ENCODE measurements at regions of chr11 and their contacts with region 1.

Region 1: DNA sequence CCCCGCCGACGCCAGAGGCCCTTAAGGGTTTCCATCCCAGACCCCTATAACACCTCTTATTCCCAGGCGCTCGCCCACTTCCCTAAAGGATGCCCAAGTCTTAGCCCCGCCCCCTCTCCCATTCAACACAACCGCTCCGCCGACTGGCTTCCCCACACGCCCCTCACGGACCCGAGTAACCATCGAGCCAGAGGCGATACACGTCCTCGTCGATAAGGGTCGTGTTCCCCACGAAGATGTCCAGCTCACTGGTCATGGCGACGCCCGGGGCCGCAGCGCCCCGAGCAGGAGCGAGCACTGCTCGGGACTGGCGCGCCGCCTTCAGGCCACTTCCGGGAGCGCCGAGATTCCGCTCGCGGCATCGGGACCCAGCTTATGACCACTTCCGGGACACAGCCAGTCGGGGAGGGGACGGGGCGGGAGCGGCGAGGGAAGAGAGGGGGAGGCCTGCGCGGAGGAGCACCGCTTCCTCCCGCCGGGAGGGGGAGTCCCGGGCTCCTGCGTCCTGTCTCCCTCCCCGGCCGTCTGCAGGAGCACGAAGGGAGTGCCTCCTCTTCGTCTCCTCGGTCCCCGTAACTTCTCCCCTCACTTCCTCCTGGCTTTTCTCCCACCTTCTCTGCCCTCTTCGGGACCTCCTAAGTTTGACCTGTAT is at the start of gene FIBP:
- DNase-seq: peak; percentile 85 to 98 (median 91)
- ATAC-seq: peak; percentile 50 to 57
- H3K4me3 Mint-ChIP-seq: peak within 1 kb of the TSS; percentile 87 to 96 (median 90)
- H3K27ac Mint-ChIP-seq: peak within 1 kb of the TSS; percentile 94 to 100 (median 99)
- H3K4me1 Mint-ChIP-seq: peaks cover 38 to 79% (median 72%) of the 10 kb centered on the region in 4 donors
- H3K27me3 Mint-ChIP-seq: no peaks in the 10 kb centered on the region
- polyA plus RNA-seq, gene FIBP: 74.9 to 97.6 (median 86.0) TPM

Region 2: DNA sequence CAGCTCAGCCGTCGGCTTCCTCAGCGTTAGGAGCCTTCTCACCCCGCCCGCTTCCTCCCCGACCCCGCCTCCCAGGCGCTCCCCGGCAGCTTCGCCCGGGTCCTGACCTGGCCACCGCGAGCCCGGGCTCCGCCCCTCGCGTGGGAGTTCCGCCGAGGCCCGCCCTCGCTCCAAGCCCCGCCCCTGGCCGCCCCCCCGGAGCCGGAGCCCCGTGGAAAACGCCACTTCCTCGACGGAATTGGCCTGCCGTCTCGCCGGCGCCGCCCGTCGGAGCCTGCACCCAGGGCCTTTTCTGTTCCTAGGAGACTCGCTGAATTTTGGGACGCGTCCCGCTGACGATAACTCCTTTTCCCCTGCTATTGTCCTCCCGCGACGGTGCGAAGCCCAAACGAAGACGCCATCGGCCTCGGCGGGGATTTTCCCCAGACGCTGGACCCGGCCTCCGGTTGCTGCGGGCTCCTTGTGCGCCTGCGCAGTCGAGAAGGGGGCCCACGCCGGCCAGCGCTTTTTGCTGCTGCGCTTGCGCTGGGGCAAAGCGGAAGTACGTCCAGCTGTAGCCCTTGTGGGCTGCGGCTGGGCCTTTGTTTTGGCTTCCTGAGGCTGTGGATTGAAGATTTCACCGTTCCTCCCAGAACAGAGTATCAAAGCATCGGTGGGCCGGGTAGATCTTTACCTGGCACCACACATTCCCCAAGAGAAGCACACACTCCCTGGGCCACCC is 235.6 kb before region 1 on chr11:
- POLR2A ChIA-PET with region 1: interaction called, 10 read pairs
- DNase-seq: peak; percentile 92 to 99 (median 96)
- ATAC-seq: peak; percentile 77 to 81
- H3K4me3 Mint-ChIP-seq: peak overlapping the region; percentile 73 to 95 (median 91)
- H3K27ac Mint-ChIP-seq: peak overlapping the region; percentile 96 to 99 (median 98)
- H3K4me1 Mint-ChIP-seq: peaks cover 38 to 66% (median 52%) of the 10 kb centered on the region in 4 donors
- H3K27me3 Mint-ChIP-seq: peaks cover 0 to 2% (median 0%) of the 10 kb centered on the region in 5 donors

Region 3: DNA sequence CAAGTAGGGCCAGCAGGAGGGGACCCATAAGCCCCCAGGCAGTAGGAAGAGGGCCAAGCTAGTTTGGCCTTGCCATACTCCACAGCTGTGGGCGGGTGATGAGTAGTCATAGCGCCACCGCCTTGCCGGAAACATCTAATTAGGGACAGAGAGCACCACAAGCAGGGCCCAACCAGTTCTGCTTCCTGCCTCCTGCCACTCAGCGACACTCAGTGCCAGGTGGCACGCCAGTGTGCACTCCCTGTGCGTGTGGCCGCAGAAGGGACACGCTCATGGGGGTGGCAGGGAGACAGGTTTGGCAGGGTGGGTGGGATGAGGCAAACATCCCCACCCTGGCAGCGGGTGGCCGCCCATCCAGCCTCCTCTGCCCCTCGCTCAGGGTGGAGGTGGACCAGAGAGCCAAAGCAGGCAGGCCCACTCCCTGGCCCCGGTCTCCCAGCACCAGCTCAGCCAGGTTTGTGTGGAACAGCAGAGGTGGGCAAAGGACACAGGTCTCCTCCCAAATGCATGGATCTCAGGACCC is 96.5 kb before region 1 on chr11:
- POLR2A ChIA-PET with region 1: no interaction called
- DNase-seq: peak in 2 of 10 donors; percentile 25 to 30
- ATAC-seq: peak in 1 of 2 donors; percentile 81
- H3K4me3 Mint-ChIP-seq: no peak overlapping the region
- H3K27ac Mint-ChIP-seq: no peak overlapping the region
- H3K4me1 Mint-ChIP-seq: peaks cover 3 to 19% (median 12%) of the 10 kb centered on the region in 4 donors
- H3K27me3 Mint-ChIP-seq: peaks cover 9 to 44% (median 25%) of the 10 kb centered on the region in 5 donors

Region 4: GRCh38 chr11:65873318-65874156 is 14.8 kb before region 1 on chr11:
- POLR2A ChIA-PET with region 1: interaction called, 209 read pairs
- DNase-seq: peak; percentile 90 to 100 (median 97)
- ATAC-seq: peak; percentile 83 to 92
- H3K4me3 Mint-ChIP-seq: peak overlapping the region; percentile 82 to 94 (median 90)
- H3K27ac Mint-ChIP-seq: peak overlapping the region; percentile 83 to 97 (median 94)
- H3K4me1 Mint-ChIP-seq: peaks cover 21 to 59% (median 45%) of the 10 kb centered on the region in 4 donors
- H3K27me3 Mint-ChIP-seq: no peaks in the 10 kb centered on the region

Region 5: GRCh38 chr11:65919146-65920033 is 31.1 kb after region 1 on chr11 and contains the start of gene DRAP1:
- POLR2A ChIA-PET with region 1: interaction called, 183 read pairs
- DNase-seq: peak; percentile 95 to 100 (median 98)
- ATAC-seq: peak; percentile 86 to 92
- H3K4me3 Mint-ChIP-seq: peak within 1 kb of the TSS; percentile 88 to 97 (median 92)
- H3K27ac Mint-ChIP-seq: peak within 1 kb of the TSS; percentile 77 to 96 (median 92)
- H3K4me1 Mint-ChIP-seq: peaks cover 19 to 65% (median 48%) of the 10 kb centered on the region in 4 donors
- H3K27me3 Mint-ChIP-seq: no peaks in the 10 kb centered on the region
- polyA plus RNA-seq, gene DRAP1: 103 to 112 (median 110) TPM

Region 6: DNA sequence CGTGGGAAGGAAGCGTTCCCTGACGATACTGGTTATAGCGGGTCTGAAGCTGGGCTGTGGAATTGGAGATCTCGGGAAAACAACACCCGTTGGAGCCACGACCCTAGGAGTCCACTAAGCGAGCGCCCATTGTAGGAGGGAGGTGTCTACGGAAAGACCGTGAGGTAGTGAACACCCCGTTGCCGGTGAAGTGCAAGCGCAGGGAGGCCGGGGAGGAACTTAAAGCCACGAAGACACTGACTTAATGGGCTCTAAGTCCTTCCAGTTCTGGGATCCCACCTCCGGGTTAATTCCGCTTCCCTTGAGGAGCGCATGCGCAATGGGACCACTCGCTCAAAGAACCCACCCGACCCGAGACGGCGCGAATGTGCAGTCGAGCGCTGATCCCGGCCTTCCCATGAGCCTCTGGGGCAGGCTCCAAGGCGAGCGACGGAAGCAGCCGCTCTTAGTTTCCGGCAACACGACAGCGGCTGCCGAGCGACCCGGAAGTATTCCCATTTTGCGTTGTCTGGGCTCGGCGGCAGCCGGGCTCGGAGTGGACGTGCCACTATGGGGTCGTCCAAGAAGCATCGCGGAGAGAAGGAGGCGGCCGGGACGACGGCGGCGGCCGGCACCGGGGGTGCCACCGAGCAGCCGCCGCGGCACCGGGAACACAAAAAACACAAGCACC is 73.1 kb after region 1 on chr11 and contains the start of gene SART1:
- POLR2A ChIA-PET with region 1: interaction called, 51 read pairs
- DNase-seq: peak; percentile 91 to 99 (median 96)
- ATAC-seq: peak; percentile 91 to 93
- H3K4me3 Mint-ChIP-seq: peak within 1 kb of the TSS; percentile 93 to 99 (median 98)
- H3K27ac Mint-ChIP-seq: peak within 1 kb of the TSS; percentile 97 to 100 (median 98)
- H3K4me1 Mint-ChIP-seq: peaks cover 23 to 53% (median 51%) of the 10 kb centered on the region in 4 donors
- H3K27me3 Mint-ChIP-seq: no peaks in the 10 kb centered on the region
- polyA plus RNA-seq, gene SART1: 16.2 to 57.3 (median 30.4) TPM

Measured in naive thymus-derived CD8-positive, alpha-beta T cell (primary cell).